ENCODE measurements at regions of chr20 and their contacts with region 1.

Region 1: GRCh38 chr20:54093423-54094267 is 23.3 kb upstream of the BCAS1 start:
- DNase-seq: no peak
- ATAC-seq: no peak
- H3K4me3 ChIP-seq: no peak overlapping the region
- H3K27ac ChIP-seq: peak overlapping the region in 1 of 2 experiments; percentile 0; a peak in 1 of 6 replicates
- H3K4me1 ChIP-seq: peaks cover 24% of the 10 kb centered on the region
- CTCF ChIP-seq: no peak
- EP300 ChIP-seq: no peak
- POLR2A ChIP-seq: no peak
- RAD21 ChIP-seq: no peak

Region 2: GRCh38 chr20:53964067-53964466 is 129.6 kb before region 1 on chr20:
- CTCF ChIA-PET with region 1: no interaction called
- POLR2A ChIA-PET with region 1: no interaction called
- DNase-seq: no peak
- ATAC-seq: no peak
- H3K4me3 ChIP-seq: no peak overlapping the region
- H3K27ac ChIP-seq: no peak overlapping the region
- H3K4me1 ChIP-seq: peaks cover 7% of the 10 kb centered on the region; the same call in 2 of the 3 replicates
- CTCF ChIP-seq: no peak
- EP300 ChIP-seq: no peak
- POLR2A ChIP-seq: no peak
- RAD21 ChIP-seq: no peak

Region 3: GRCh38 chr20:53984356-53985149 is 109.1 kb before region 1 on chr20:
- CTCF ChIA-PET with region 1: no interaction called
- POLR2A ChIA-PET with region 1: no interaction called
- DNase-seq: no peak
- ATAC-seq: no peak
- H3K4me3 ChIP-seq: no peak overlapping the region
- H3K27ac ChIP-seq: no peak overlapping the region
- H3K4me1 ChIP-seq: no peaks in the 10 kb centered on the region
- CTCF ChIP-seq: no peak
- EP300 ChIP-seq: no peak
- POLR2A ChIP-seq: no peak
- RAD21 ChIP-seq: no peak

Region 4: GRCh38 chr20:54115151-54115854 is 21.7 kb after region 1 on chr20:
- CTCF ChIA-PET with region 1: interaction called, 29 read pairs
- POLR2A ChIA-PET with region 1: interaction called, 5 read pairs
- DNase-seq: peak; percentile 77 to 92
- ATAC-seq: peak; percentile 84 to 88
- H3K4me3 ChIP-seq: no peak overlapping the region
- H3K27ac ChIP-seq: peak overlapping the region; percentile 94 to 98
- H3K4me1 ChIP-seq: peaks cover 76% of the 10 kb centered on the region
- CTCF ChIP-seq: no peak
- EP300 ChIP-seq: no peak
- POLR2A ChIP-seq: no peak
- RAD21 ChIP-seq: no peak

Region 5: GRCh38 chr20:54132612-54133433 is 39.2 kb after region 1 on chr20:
- CTCF ChIA-PET with region 1: interaction called, 25 read pairs
- POLR2A ChIA-PET with region 1: interaction called, 4 read pairs
- DNase-seq: peak; percentile 70 to 96
- ATAC-seq: peak; percentile 83 to 93
- H3K4me3 ChIP-seq: no peak overlapping the region
- H3K27ac ChIP-seq: peak overlapping the region; percentile 87 to 96
- H3K4me1 ChIP-seq: peaks cover 49% of the 10 kb centered on the region
- CTCF ChIP-seq: no peak
- EP300 ChIP-seq: peak; percentile 98
- POLR2A ChIP-seq: no peak
- RAD21 ChIP-seq: peak in 1 of 2 experiments; percentile 47; a peak in 4 of 5 replicates

Region 6: GRCh38 chr20:54162360-54163012 is 68.8 kb after region 1 on chr20:
- CTCF ChIA-PET with region 1: interaction called, 37 read pairs
- POLR2A ChIA-PET with region 1: interaction called, 6 read pairs
- DNase-seq: peak in 1 of 2 experiments; percentile 47
- ATAC-seq: peak in 1 of 2 experiments; percentile 0; a peak in 3 of 6 replicates
- H3K4me3 ChIP-seq: peak overlapping the region; percentile 20
- H3K27ac ChIP-seq: peak overlapping the region; percentile 93 to 100
- H3K4me1 ChIP-seq: peaks cover 100% of the 10 kb centered on the region
- CTCF ChIP-seq: no peak
- EP300 ChIP-seq: no peak
- POLR2A ChIP-seq: no peak
- RAD21 ChIP-seq: no peak

Region 7: DNA sequence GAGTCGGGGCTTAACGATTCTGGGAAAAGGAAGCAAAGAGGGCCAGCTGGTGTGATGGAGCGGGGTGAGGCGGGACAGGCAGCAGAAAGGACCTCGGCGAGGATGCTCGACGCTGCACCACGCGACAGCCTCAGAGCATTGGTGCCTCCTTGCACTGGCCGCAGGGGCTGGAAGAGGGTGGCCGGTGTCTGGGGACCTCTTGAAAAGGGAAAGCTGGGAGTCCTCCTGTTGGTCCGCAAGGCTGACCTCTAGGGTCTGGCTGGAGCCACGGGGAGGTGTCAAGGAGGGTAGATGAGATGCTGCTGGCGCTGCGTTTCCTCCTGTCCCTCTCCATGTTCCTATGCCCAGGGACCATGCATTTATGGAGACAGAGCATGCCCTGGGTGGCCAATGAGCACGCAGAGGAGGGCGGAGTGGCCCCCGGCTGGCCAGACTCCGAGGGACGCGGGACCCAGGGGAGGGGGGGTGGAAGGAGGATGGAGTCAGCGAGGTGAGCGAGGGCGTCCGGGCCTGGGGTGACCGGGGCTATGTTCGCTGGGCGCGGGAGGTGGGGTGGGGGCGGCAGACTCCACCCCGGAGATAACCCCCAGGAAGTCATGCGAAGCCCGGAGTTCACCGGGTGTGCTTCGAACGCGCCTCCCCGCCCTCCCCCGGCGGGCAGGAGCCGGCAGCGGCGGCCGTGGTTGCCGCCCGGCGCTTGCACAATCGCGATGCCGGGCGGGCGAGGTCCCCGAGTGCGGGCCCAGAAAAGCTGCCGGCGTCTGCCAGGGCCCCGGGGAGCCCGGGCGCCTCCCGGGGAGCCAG is 80.2 kb after region 1 on chr20 and contains the start of gene CYP24A1:
- CTCF ChIA-PET with region 1: interaction called, 37 read pairs
- POLR2A ChIA-PET with region 1: interaction called, 6 read pairs
- DNase-seq: peak; percentile 97 to 98
- ATAC-seq: peak; percentile 87
- H3K4me3 ChIP-seq: peak within 1 kb of the TSS; percentile 83
- H3K27ac ChIP-seq: peak within 1 kb of the TSS; percentile 93 to 100
- H3K4me1 ChIP-seq: peaks cover 43% of the 10 kb centered on the region
- CTCF ChIP-seq: no peak
- EP300 ChIP-seq: peak; percentile 92; a peak in 4 of 5 replicates
- POLR2A ChIP-seq: peak; percentile 100
- RAD21 ChIP-seq: no peak
- polyA plus RNA-seq, gene CYP24A1: 1,617 and 1,630 TPM in 2 replicates

Measured in A549 (cell line).